Head of caudate nucleus (tissue), 42 donors: ENCODE measurements at regions of chr2 and their contacts with region 1.

Region 1: DNA sequence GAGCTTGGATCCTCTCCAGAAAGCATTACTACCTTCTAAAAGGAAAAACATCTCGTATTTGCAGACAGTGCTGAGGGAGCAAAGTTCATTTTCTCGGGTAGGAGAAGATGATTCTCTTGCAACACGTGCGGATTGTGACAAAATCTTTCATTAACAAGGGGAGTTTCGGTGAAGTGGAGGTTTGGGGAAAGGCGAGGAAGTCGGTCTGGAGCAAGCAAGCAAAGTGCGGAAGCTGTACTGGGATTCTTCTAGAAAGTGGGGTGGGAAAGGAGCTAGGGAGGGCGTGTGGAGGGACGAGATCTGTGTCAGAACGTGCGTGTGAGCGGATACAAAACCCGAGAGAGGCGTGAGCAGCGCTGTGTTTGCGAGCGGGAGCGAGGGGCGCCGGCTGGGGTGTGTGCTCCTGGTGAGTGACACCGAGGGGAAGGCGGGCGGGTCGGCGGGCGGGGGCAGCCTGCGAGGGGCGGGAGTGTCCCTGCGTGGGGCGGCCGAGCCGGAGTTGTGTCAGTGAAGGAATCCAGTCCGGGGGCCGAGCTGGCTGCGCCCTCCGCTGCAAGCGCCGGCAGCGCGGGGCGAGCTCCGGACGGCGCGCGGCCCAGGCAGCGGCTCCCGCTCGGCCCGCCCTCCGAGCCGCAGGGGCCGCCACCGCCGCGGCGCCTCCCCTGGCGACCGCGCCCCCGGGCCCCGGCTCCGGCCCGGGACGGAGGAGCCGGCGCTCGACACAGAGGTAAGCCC is at the start of gene SPATS2L:
- DNase-seq: peak; percentile 45 to 92 (median 79)

Region 2: GRCh38 chr2:199704358-199705238 is 601.8 kb before region 1 on chr2:
- intact Hi-C with region 1: no loop called
- DNase-seq: peak in 31 of 42 donors; percentile 11 to 78 (median 37)

Region 3: GRCh38 chr2:199979832-199980628 is 326.3 kb before region 1 on chr2:
- intact Hi-C with region 1: loop called (anchors 5 kb)
- DNase-seq: peak; percentile 73 to 97 (median 92)

Region 4: DNA sequence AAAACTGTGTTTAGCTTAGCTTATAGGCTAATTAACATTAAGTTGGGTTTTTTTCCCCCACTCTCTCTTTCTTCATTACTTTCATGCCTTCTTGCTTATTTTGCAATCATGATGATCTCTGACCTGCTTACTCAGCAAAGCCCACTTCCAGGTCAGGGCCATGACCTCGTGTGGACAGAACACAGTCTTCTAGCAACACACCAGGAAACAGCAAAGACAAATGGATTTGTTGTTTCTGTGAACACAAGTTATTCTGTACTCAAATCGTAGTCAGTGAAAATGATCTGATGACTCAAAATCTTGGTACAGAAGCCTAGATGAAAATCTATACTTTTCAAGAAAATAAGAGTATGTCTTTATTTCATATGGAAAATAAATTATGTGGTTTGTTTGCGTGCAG is 60.8 kb after region 1 on chr2:
- intact Hi-C with region 1: no loop called
- DNase-seq: peak in 1 of 42 donors; percentile 12

Region 5: DNA sequence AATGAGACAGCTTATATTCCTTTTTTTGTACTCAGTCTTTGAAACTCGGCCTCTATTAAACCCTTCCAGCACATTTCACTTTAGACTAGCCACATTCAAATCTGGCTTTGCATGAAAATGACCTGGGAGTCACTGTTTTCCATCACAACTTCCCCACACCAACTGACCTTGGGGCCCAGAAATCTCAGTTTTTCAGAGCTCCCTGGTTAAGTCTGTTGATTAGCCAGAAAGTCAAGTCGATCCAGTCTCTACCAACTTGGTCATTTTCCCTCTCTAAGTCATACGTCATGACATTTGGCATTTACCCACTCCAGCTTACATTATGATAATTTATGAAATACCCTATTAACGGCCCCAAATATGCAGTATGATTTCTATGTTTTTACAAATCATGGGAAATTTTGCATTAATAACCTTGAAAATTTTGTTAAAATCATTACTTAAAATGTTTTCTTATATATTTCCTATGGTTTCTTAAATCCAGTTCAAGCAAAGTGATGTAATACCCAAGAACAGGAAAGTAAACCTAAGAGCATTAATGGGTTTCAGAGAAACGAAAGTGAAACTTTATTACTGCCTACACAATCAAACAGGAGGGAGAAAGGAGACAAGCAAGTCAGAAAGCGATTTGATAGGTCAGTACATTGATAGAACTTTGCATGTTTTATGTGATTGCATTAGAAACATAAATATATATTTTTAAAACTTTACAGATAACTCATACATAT is 77.2 kb after region 1 on chr2:
- intact Hi-C with region 1: loop called (anchors 5 kb)
- DNase-seq: peak in 1 of 42 donors; percentile 21

Region 6: GRCh38 chr2:200469708-200470211 is 163.4 kb after region 1 on chr2:
- intact Hi-C with region 1: loop called (anchors 1 kb)
- DNase-seq: peak in 32 of 42 donors; percentile 16 to 84 (median 56)

Region 7: DNA sequence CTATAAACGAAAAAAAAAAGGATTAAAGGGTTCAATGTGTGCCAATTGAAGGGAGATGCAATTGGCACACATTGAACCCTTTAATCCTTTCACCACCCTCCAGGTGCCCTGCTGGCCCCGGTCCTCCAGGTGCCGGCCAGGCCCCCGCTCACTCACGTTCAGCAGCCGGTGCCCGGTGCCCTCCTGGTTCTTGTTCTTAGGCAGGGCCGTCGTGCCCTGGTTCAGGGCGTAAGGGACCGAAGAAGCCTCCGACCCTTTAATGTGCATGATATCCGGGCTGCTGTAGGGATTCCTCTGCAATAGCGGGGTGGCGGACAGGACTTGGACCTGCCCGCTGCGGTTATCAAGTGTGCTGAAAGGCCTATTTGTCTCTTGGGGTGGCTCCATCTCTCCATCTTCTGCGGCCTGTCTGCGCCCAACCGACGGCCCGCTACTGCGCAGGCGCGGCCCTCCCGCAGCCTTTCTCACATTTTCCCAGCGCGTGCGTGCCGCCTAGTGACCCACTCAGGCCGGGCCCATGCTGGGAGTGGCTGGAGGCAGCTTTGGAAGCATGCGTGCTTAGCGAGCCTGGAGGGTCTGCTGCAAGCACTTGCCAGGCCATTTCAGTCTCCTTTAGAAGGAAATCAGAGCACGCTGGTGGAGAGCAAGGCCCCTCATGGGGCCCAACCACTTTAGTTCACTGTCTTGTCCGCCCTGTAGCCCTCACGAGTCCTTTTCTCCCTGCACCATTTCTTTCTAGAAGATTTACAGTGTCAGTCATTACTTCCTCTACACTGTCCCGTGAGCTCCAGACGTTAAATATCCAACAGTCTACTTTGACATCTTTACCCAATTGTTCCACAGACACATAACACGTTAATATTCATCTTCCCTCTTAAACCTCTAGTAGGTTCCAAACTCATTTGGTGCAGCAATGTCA is 1312.6 kb after region 1 on chr2:
- intact Hi-C with region 1: no loop called
- DNase-seq: peak in 38 of 42 donors; percentile 5 to 73 (median 48)